OCI-LY7 (cell line): ENCODE measurements at regions of chr13 and their contacts with region 1.

Region 1: GRCh38 chr13:48580185-48580803 is 47.4 kb upstream of the RCBTB2 start:
- DNase-seq: peak; percentile 78
- H3K4me3 ChIP-seq: no peak overlapping the region
- H3K27ac ChIP-seq: no peak overlapping the region
- H3K4me1 ChIP-seq: peaks cover 39% of the 10 kb centered on the region
- CTCF ChIP-seq: peak; percentile 97

Region 2: GRCh38 chr13:48233046-48233907 is 347.0 kb before region 1 on chr13 and contains the start of gene ITM2B:
- CTCF ChIA-PET with region 1: interaction called, 3 read pairs
- POLR2A ChIA-PET with region 1: interaction called, 4 read pairs
- intact Hi-C with region 1: loop called (anchors 1 kb)
- DNase-seq: peak; percentile 77
- H3K4me3 ChIP-seq: peak within 1 kb of the TSS; percentile 76
- H3K27ac ChIP-seq: peak within 1 kb of the TSS; percentile 49
- H3K4me1 ChIP-seq: peaks cover 31% of the 10 kb centered on the region
- CTCF ChIP-seq: peak; percentile 79
- total RNA-seq, gene ITM2B: 14.7 and 21.1 TPM in 2 replicates

Region 3: GRCh38 chr13:48334534-48335127 is 245.7 kb before region 1 on chr13:
- CTCF ChIA-PET with region 1: interaction called, 3 read pairs
- POLR2A ChIA-PET with region 1: interaction called, 13 read pairs
- intact Hi-C with region 1: loop called (anchors 1 kb)
- DNase-seq: peak; percentile 65
- H3K4me3 ChIP-seq: no peak overlapping the region
- H3K27ac ChIP-seq: no peak overlapping the region
- H3K4me1 ChIP-seq: no peaks in the 10 kb centered on the region
- CTCF ChIP-seq: peak; percentile 99

Region 4: DNA sequence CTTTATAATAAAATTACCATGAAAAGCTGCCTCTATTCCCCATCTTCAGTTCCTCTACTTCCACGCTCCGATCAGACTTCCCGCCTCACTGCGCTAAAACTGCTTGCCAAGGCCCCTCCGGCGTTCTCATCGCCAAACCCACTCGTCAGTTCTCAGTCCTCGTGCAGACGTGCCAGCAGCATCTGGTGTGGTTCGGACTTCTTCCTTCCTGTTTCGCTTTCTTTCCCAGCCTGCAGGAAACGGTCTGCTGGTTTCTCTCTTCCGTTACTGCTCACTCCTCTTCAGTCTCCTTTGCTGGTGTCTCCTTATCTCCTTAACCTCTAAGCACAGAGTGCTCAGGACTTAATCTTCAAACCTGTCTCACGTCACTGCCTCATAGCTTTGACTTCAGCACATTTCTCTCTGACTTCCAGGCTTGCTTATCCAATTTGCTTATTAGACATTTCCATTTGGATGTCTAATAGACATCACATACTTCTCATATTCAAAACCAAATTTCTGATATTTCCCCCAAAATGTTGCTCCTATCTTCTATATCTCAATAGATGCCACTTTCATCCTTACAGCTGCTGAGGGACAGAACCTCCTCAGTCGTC is 87.7 kb before region 1 on chr13:
- CTCF ChIA-PET with region 1: interaction called, 4 read pairs
- POLR2A ChIA-PET with region 1: interaction called, 3 read pairs
- intact Hi-C with region 1: loop called (anchors 1 kb)
- DNase-seq: peak; percentile 89
- H3K4me3 ChIP-seq: peak overlapping the region; percentile 61
- H3K27ac ChIP-seq: peak overlapping the region; percentile 68
- H3K4me1 ChIP-seq: peaks cover 51% of the 10 kb centered on the region
- CTCF ChIP-seq: no peak

Region 5: GRCh38 chr13:48539550-48539949 is 40.7 kb before region 1 on chr13:
- CTCF ChIA-PET with region 1: no interaction called
- POLR2A ChIA-PET with region 1: no interaction called
- intact Hi-C with region 1: no loop called
- DNase-seq: no peak
- H3K4me3 ChIP-seq: no peak overlapping the region
- H3K27ac ChIP-seq: no peak overlapping the region
- H3K4me1 ChIP-seq: peaks cover 19% of the 10 kb centered on the region
- CTCF ChIP-seq: no peak

Region 6: DNA sequence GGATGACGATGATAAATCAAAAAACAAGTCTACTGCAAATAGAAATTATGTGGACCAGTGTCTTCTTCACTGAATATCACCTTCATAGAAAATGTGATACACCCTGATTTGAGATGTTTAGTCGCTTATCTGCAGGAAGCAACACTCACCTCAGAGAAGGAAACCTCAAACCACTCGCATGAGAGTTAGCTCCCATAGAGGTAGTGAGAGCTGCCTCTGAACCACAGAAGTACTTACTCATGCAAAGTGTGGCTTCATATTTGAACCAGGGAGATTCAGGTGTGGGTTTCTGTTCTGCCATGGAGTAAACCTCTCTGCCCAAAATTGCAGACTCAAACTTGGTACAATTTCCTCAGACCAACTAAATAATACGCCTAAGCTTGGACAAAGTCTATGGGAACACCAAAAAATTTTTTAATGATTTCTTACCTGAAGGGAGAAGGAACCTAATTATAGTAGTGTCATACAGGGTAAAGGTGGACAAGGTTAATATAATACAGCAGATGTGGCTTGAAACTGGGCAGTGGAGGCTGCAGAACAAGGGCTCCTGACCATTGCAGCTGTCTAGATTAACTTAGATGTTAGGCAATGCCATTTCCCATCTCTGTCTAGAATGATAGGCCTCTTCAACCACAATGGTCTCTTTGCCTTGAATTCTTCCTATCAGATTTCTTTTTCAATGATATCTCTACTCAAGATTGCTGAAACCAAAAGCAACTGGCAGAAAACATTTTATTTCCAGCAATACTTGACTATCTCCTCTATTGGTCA is 17.8 kb before region 1 on chr13:
- CTCF ChIA-PET with region 1: interaction called, 6 read pairs
- POLR2A ChIA-PET with region 1: interaction called, 19 read pairs
- intact Hi-C with region 1: loop called (anchors 1 kb)
- DNase-seq: peak; percentile 94
- H3K4me3 ChIP-seq: peak overlapping the region; percentile 52
- H3K27ac ChIP-seq: peak overlapping the region; percentile 83
- H3K4me1 ChIP-seq: peaks cover 50% of the 10 kb centered on the region
- CTCF ChIP-seq: no peak